MCF 10A (cell line): ENCODE measurements at regions of chr20 and their contacts with region 1.

Region 1: DNA sequence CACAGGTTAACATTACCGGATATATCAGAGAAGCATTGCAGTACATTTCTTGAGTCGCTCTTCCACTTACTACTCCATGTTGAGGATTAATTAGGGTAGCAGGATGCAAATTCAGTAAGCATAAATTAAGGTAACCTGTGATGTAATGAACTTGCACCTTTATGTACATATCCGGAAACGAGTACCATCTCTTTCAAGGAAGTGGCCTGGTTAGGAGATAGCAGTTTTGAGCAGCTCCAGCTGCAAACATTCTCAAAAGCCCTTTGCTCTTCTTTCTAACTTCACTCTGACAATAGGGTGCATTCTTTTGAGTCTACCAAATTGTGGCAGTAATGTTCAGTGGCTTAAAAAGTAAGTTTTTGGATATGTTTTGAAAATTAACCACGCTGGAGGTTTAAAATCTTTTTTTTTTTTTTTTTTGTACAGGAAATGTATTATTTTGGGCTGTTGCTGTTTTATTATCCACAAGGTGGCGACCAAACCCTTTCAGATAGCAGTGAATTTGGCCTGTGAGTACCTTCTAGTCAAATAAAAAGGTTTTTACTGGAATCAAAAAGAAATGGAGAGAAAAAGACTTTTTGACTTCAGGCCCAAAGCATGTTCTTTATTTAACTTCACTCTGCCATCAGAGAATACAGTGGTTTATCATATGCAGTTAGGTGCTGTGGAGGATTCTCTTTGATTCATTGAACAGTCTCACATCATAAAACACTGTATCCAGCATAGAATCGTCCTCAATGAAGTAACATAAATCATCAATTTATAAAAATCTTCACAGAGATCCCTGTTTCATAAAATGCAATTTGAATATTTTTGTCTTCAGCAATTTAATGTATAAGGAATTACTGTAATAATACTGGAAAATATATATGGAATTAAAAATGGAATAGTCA is 8.9 kb downstream of the FAM217B start:
- DNase-seq: peak; percentile 71
- H3K4me3 Mint-ChIP-seq: no peak overlapping the region
- H3K27ac Mint-ChIP-seq: no peak overlapping the region
- H3K4me1 Mint-ChIP-seq: no peaks in the 10 kb centered on the region
- H3K27me3 Mint-ChIP-seq: no peaks in the 10 kb centered on the region
- CTCF ChIP-seq: peak; percentile 23

Region 2: DNA sequence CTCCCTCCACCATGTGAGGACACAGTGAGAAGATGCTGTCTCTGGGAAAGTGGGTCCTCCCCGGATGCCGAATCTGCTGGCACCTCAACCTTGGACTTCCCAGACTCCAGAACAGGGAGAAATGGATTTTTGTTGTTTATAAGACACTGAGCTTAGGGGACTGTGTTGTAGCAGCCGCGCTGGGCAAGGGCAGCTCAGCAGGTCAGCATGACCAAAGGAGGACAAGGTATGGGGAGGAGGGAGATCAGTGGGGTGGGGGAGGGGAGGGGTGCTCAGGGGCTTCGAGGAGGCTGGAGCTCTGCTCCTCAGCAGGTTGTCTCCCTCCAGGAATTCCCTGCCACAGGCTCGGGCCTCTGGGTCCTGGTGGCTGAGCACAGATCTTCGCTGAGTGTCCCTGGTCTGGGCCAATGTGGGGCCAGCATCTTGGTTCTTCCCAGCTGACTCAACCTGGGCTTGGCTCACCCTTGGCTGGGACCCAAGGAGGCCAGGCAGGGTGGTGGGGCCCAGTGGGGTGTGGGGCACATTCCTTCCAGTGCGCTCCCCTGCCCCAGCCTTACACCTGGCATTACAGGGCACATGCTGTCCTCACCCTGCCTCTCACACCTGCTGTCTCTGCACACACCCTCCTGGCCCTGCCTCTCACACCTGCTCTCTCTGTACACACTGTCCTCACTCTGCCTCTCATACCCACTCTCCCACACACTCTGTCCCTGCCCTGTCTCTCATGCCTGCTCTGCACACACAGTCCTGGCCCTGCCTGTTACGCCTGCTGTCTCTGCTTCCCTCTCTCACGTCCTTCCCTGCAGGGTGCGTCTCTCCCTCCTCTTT is 122.9 kb before region 1 on chr20:
- CTCF ChIA-PET with region 1: no interaction called
- POLR2A ChIA-PET with region 1: no interaction called
- intact Hi-C with region 1: no loop called
- DNase-seq: peak; percentile 83
- H3K4me3 Mint-ChIP-seq: peak overlapping the region; percentile 17
- H3K27ac Mint-ChIP-seq: peak overlapping the region; percentile 44
- H3K4me1 Mint-ChIP-seq: peaks cover 65% of the 10 kb centered on the region
- H3K27me3 Mint-ChIP-seq: no peaks in the 10 kb centered on the region
- CTCF ChIP-seq: no peak

Region 3: DNA sequence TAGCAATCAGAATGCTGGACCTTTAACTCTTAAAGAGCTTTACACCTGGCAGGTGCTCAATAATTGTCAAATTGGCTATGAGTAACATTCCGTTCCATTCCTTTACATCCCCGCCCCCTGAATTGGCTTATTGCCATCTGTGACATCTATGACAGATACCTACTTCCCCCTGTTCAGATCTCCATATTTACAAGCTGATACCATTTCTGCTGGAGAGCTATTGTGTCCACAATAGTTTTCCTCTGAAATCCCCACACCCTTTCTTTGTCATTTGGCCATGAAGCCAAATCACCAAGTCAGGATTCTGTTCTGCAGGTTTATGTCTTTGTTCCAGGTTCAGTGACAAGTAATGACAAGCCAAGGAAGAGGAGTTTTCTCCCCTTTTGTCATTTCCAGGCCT is 12.3 kb after region 1 on chr20:
- CTCF ChIA-PET with region 1: interaction called, 39 read pairs
- POLR2A ChIA-PET with region 1: interaction called, 4 read pairs
- intact Hi-C with region 1: no loop called
- DNase-seq: no peak
- H3K4me3 Mint-ChIP-seq: no peak overlapping the region
- H3K27ac Mint-ChIP-seq: no peak overlapping the region
- H3K4me1 Mint-ChIP-seq: peaks cover 12% of the 10 kb centered on the region
- H3K27me3 Mint-ChIP-seq: no peaks in the 10 kb centered on the region
- CTCF ChIP-seq: no peak

Region 4: DNA sequence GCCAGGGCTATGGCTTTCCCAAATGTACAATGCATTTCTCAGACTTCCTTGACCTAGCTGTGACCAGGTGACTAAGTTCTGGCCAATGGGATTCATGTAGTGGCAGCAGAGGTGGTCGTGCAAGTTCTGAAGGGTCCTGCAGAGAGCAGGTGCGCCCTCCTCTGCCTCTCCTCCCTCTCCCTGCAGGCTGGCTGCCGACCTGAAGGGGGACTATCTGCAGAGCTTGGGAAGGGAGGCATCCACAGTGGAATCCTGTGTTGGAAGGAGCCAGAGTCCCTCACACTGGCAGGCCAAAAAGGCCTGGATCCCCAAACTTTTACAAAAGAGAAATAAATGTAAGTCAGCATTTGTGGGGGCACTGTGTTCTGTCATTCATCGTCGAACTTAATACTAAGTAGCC is 75.7 kb after region 1 on chr20:
- CTCF ChIA-PET with region 1: interaction called, 11 read pairs
- POLR2A ChIA-PET with region 1: no interaction called
- intact Hi-C with region 1: no loop called
- DNase-seq: no peak
- H3K4me3 Mint-ChIP-seq: no peak overlapping the region
- H3K27ac Mint-ChIP-seq: no peak overlapping the region
- H3K4me1 Mint-ChIP-seq: no peaks in the 10 kb centered on the region
- H3K27me3 Mint-ChIP-seq: no peaks in the 10 kb centered on the region
- CTCF ChIP-seq: no peak

Region 5: GRCh38 chr20:60050158-60050947 is 101.3 kb after region 1 on chr20:
- CTCF ChIA-PET with region 1: interaction called, 360 read pairs
- POLR2A ChIA-PET with region 1: interaction called, 3 read pairs
- intact Hi-C with region 1: loop called (anchors 1 kb)
- DNase-seq: peak; percentile 64
- H3K4me3 Mint-ChIP-seq: no peak overlapping the region
- H3K27ac Mint-ChIP-seq: no peak overlapping the region
- H3K4me1 Mint-ChIP-seq: peaks cover 14% of the 10 kb centered on the region
- H3K27me3 Mint-ChIP-seq: no peaks in the 10 kb centered on the region
- CTCF ChIP-seq: peak; percentile 47

Region 6: DNA sequence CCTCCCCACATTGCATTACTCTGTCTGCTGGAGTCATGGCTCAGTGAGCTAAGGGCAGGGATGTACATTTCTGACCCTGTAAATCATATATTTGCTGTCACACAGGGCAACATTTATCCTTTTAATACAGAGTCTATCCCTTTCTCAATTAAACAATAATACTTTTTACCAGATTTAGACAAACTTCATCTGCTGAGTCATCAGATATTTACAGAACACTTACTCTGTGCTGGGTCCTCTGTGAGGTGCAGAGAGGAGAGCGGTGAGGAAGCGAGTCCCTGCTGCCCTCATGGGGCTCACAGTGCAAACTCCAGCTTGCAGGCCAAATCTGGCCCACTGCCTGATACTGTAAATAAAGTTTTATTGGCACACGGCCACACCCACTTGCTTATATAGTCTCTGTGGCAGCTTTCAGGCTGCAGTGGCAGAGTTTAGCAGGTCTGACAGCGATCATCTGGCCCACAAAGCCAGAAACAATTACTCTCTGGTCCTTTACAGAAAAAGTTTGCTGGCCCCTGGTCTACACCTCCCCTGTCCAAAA is 153.7 kb after region 1 on chr20:
- CTCF ChIA-PET with region 1: no interaction called
- POLR2A ChIA-PET with region 1: no interaction called
- intact Hi-C with region 1: no loop called
- DNase-seq: no peak
- H3K4me3 Mint-ChIP-seq: no peak overlapping the region
- H3K27ac Mint-ChIP-seq: no peak overlapping the region
- H3K4me1 Mint-ChIP-seq: no peaks in the 10 kb centered on the region
- H3K27me3 Mint-ChIP-seq: peaks cover 39% of the 10 kb centered on the region
- CTCF ChIP-seq: no peak

Region 7: GRCh38 chr20:60137629-60138245 is 188.7 kb after region 1 on chr20:
- CTCF ChIA-PET with region 1: interaction called, 6 read pairs
- POLR2A ChIA-PET with region 1: no interaction called
- intact Hi-C with region 1: loop called (anchors 5 kb)
- DNase-seq: peak; percentile 65
- H3K4me3 Mint-ChIP-seq: peak overlapping the region; percentile 80
- H3K27ac Mint-ChIP-seq: no peak overlapping the region
- H3K4me1 Mint-ChIP-seq: peaks cover 1% of the 10 kb centered on the region
- H3K27me3 Mint-ChIP-seq: peaks cover 12% of the 10 kb centered on the region
- CTCF ChIP-seq: peak; percentile 71